CD4-positive, alpha-beta T cell (primary cell): ENCODE measurements at regions of chr1 and their contacts with region 1.

Region 1: GRCh38 chr1:26787706-26788514 is at the start of gene PIGV:
- DNase-seq: peak; percentile 76 to 94 (median 86)
- ATAC-seq: peak; percentile 69
- H3K4me3 ChIP-seq: peak within 1 kb of the TSS; percentile 84
- H3K4me3 Mint-ChIP-seq: peak within 1 kb of the TSS; percentile 98
- H3K27ac ChIP-seq: peak within 1 kb of the TSS; percentile 95 to 97
- H3K27ac Mint-ChIP-seq: peak within 1 kb of the TSS; percentile 96
- H3K4me1 ChIP-seq: peaks cover 70% of the 10 kb centered on the region
- H3K4me1 Mint-ChIP-seq: peaks cover 71% of the 10 kb centered on the region
- H3K27me3 ChIP-seq: no peaks in the 10 kb centered on the region
- H3K27me3 Mint-ChIP-seq: no peaks in the 10 kb centered on the region
- CTCF ChIP-seq: no peak
- total RNA-seq, gene PIGV: 3.8 to 4.7 TPM

Region 2: DNA sequence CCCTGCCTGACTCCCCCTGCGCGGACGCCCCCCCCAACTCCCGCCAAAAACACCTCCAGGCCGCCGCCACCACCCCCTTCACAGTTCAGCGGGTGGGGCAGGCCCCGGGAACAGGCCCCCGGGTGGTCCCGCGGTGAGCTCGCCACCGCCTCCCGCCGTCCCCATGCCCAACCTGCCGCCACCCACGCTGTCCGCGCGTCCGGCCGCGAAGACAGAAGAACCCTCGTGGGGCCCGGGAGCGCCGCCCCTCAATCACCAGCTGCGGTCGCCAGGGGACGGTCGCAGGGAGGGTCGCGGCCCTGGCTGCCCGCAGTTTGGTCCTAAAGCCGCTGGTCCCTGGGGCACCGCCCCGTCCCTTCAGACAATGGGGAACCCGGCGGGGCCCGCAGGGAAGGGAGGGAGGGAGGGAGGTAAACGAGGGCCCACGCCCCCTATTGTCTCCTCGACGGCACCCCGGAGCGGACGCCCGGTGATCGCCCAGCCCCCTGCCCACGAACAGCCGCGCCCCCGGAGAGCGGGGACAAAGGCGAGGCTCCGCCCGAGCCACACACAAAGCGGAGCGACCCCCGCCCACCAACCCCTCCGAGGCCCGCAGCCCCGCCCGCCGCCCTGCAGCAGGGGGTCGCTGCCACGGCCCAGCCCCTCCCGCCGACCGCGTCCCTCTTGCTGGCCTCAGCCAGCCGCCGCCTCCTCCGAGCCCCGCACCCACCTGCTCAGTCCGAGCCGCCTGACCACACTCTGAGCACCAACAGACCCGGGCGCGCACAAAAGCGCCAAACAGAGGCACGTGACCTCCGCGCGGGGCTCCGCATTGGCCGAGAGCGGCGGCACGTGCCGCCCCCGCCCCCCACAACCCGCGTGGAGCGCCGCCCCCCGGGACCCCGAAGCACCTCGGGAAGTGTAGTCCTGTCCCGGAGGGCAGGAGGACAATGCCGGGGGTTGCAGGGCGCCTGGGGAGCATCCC is 881.9 kb before region 1 on chr1 and contains the start of gene STMN1:
- CTCF ChIA-PET with region 1: no interaction called
- POLR2A ChIA-PET with region 1: no interaction called
- intact Hi-C with region 1: loop called in 1 of 2 experiments (anchors 5 kb)
- DNase-seq: peak; percentile 81 to 94 (median 88)
- ATAC-seq: peak; percentile 75
- H3K4me3 ChIP-seq: peak within 1 kb of the TSS; percentile 72
- H3K4me3 Mint-ChIP-seq: peak within 1 kb of the TSS; percentile 98
- H3K27ac ChIP-seq: peak within 1 kb of the TSS; percentile 64 to 65
- H3K27ac Mint-ChIP-seq: peak within 1 kb of the TSS; percentile 97
- H3K4me1 ChIP-seq: peaks cover 22% of the 10 kb centered on the region
- H3K4me1 Mint-ChIP-seq: peaks cover 23% of the 10 kb centered on the region
- H3K27me3 ChIP-seq: no peaks in the 10 kb centered on the region
- H3K27me3 Mint-ChIP-seq: no peaks in the 10 kb centered on the region
- CTCF ChIP-seq: no peak
- total RNA-seq, gene STMN1: 25.2 to 25.6 TPM

Region 3: DNA sequence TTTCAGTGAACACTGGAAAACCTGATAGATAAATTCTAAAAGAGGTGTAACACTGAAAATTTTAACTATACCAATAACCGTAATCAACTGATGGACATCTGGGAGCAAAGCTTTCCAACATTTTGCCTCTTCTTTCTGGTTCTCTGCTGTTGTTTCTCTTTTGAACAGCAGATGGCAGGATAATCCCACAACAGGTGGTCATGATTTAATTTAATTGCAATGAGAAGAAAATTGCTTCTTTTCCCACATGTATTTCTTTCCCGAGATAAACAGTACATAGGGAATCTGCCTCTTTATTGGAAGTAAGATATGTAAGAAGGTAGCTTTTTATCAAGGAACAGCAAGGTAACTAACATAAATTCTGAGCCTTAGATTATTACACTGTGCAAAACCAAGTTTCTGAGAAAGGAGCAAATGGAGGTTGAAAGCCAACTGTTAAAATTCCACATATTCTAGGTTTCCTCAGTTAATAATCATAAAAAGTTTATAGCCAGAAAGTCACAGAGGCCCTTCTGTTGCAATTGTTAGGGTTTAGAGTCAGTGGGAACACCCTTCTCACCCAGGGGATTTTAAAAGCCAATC is 185.4 kb before region 1 on chr1:
- CTCF ChIA-PET with region 1: interaction called, 80 read pairs
- POLR2A ChIA-PET with region 1: interaction called, 46 read pairs
- intact Hi-C with region 1: loop called (anchors 1 kb)
- DNase-seq: peak in 10 of 14 experiments; percentile 4 to 83 (median 30)
- ATAC-seq: peak; percentile 79
- H3K4me3 ChIP-seq: no peak overlapping the region
- H3K4me3 Mint-ChIP-seq: no peak overlapping the region
- H3K27ac ChIP-seq: no peak overlapping the region
- H3K27ac Mint-ChIP-seq: no peak overlapping the region
- H3K4me1 ChIP-seq: no peaks in the 10 kb centered on the region
- H3K4me1 Mint-ChIP-seq: peaks cover 14% of the 10 kb centered on the region
- H3K27me3 ChIP-seq: no peaks in the 10 kb centered on the region
- H3K27me3 Mint-ChIP-seq: no peaks in the 10 kb centered on the region
- CTCF ChIP-seq: peak; percentile 97

Region 4: GRCh38 chr1:26695356-26696118 is 92.4 kb before region 1 on chr1 and contains the start of gene ARID1A:
- CTCF ChIA-PET with region 1: interaction called, 47 read pairs
- POLR2A ChIA-PET with region 1: interaction called, 346 read pairs
- intact Hi-C with region 1: loop called (anchors 1 kb)
- DNase-seq: peak; percentile 93 to 98 (median 95)
- ATAC-seq: peak; percentile 60
- H3K4me3 ChIP-seq: peak within 1 kb of the TSS; percentile 89
- H3K4me3 Mint-ChIP-seq: peak within 1 kb of the TSS; percentile 92
- H3K27ac ChIP-seq: peak within 1 kb of the TSS; percentile 71 to 88
- H3K27ac Mint-ChIP-seq: peak within 1 kb of the TSS; percentile 96
- H3K4me1 ChIP-seq: peaks cover 40% of the 10 kb centered on the region
- H3K4me1 Mint-ChIP-seq: peaks cover 36% of the 10 kb centered on the region
- H3K27me3 ChIP-seq: no peaks in the 10 kb centered on the region
- H3K27me3 Mint-ChIP-seq: no peaks in the 10 kb centered on the region
- CTCF ChIP-seq: no peak
- total RNA-seq, gene ARID1A: 102 to 103 TPM

Region 5: GRCh38 chr1:26744075-26744959 is 43.6 kb before region 1 on chr1:
- CTCF ChIA-PET with region 1: interaction called, 4 read pairs
- POLR2A ChIA-PET with region 1: interaction called, 51 read pairs
- intact Hi-C with region 1: loop called (anchors 2 kb)
- DNase-seq: peak; percentile 53 to 96 (median 70)
- ATAC-seq: peak; percentile 94
- H3K4me3 ChIP-seq: peak overlapping the region; percentile 27
- H3K4me3 Mint-ChIP-seq: peak overlapping the region; percentile 57
- H3K27ac ChIP-seq: peak overlapping the region; percentile 72 to 80
- H3K27ac Mint-ChIP-seq: peak overlapping the region; percentile 87
- H3K4me1 ChIP-seq: peaks cover 88% of the 10 kb centered on the region
- H3K4me1 Mint-ChIP-seq: peaks cover 89% of the 10 kb centered on the region
- H3K27me3 ChIP-seq: no peaks in the 10 kb centered on the region
- H3K27me3 Mint-ChIP-seq: no peaks in the 10 kb centered on the region
- CTCF ChIP-seq: no peak

Region 6: DNA sequence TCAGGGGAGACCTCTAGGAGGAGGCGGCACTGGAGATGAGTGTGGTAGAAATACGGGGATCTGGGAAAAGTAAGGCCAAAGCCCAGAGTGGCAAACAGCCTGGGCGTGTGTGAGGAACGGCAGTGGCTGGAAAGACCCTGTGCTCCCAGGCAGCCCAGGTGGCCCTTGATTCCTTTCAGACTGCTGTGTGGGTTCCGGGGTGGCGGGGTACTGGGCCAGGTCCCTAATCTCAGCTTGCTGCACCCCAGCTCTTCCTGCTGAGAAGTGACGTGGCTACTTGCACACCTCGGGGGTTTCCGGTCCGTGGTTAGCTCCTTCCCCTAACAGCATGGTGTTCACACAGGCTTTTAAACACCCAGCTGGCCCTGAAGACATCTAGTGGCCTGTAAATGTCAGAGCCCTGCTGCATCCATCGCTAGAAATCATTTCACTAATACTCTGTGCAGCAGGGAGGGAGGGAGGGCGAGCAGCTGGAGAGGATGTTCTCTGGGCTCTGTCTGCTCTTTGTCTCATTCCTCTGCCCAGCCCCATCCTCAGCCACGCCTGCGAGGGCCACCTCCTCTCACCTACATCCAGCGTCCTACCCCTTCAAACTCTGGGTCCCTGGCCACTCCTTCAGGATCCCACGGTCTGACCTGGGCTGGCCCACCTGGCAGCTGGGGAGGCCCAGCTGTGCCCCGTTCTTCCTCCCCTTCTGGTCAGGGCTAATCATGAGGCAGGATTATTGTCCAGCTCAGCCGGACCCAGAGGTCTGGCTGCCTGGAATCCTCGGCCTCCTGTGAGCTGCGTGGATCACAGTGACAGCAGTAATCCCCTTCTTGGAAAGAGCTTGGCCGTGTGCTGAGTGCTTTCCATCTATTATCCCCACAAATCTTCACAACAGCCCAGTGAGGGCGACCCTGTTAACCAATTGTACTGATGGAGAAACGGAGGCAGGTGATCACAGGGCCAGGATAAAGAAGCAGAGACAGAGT is 45.8 kb after region 1 on chr1:
- CTCF ChIA-PET with region 1: interaction called, 8 read pairs
- POLR2A ChIA-PET with region 1: interaction called, 25 read pairs
- intact Hi-C with region 1: no loop called
- DNase-seq: peak; percentile 76 to 99 (median 86)
- ATAC-seq: peak; percentile 94
- H3K4me3 ChIP-seq: peak overlapping the region; percentile 32
- H3K4me3 Mint-ChIP-seq: peak overlapping the region; percentile 86
- H3K27ac ChIP-seq: peak overlapping the region; percentile 96 to 97
- H3K27ac Mint-ChIP-seq: peak overlapping the region; percentile 100
- H3K4me1 ChIP-seq: peaks cover 75% of the 10 kb centered on the region
- H3K4me1 Mint-ChIP-seq: peaks cover 75% of the 10 kb centered on the region
- H3K27me3 ChIP-seq: no peaks in the 10 kb centered on the region
- H3K27me3 Mint-ChIP-seq: no peaks in the 10 kb centered on the region
- CTCF ChIP-seq: peak; percentile 33

Region 7: GRCh38 chr1:26853156-26853555 is 65.2 kb after region 1 on chr1:
- CTCF ChIA-PET with region 1: no interaction called
- POLR2A ChIA-PET with region 1: no interaction called
- intact Hi-C with region 1: no loop called
- DNase-seq: peak; percentile 71 to 91 (median 82)
- ATAC-seq: peak; percentile 94
- H3K4me3 ChIP-seq: no peak overlapping the region
- H3K4me3 Mint-ChIP-seq: no peak overlapping the region
- H3K27ac ChIP-seq: no peak overlapping the region
- H3K27ac Mint-ChIP-seq: no peak overlapping the region
- H3K4me1 ChIP-seq: no peaks in the 10 kb centered on the region
- H3K4me1 Mint-ChIP-seq: peaks cover 9% of the 10 kb centered on the region
- H3K27me3 ChIP-seq: no peaks in the 10 kb centered on the region
- H3K27me3 Mint-ChIP-seq: no peaks in the 10 kb centered on the region
- CTCF ChIP-seq: peak; percentile 91

Region 8: GRCh38 chr1:26900001-26900814 is 112.3 kb after region 1 on chr1 and contains the start of gene GPATCH3:
- CTCF ChIA-PET with region 1: no interaction called
- POLR2A ChIA-PET with region 1: interaction called, 10 read pairs
- intact Hi-C with region 1: no loop called
- DNase-seq: peak; percentile 78 to 95 (median 86)
- ATAC-seq: peak; percentile 94
- H3K4me3 ChIP-seq: peak within 1 kb of the TSS; percentile 98
- H3K4me3 Mint-ChIP-seq: peak within 1 kb of the TSS; percentile 98
- H3K27ac ChIP-seq: peak within 1 kb of the TSS; percentile 82 to 94
- H3K27ac Mint-ChIP-seq: peak within 1 kb of the TSS; percentile 93
- H3K4me1 ChIP-seq: peaks cover 29% of the 10 kb centered on the region
- H3K4me1 Mint-ChIP-seq: peaks cover 31% of the 10 kb centered on the region
- H3K27me3 ChIP-seq: no peaks in the 10 kb centered on the region
- H3K27me3 Mint-ChIP-seq: no peaks in the 10 kb centered on the region
- CTCF ChIP-seq: no peak
- total RNA-seq, gene GPATCH3: 30.2 to 32.4 TPM

Region 9: DNA sequence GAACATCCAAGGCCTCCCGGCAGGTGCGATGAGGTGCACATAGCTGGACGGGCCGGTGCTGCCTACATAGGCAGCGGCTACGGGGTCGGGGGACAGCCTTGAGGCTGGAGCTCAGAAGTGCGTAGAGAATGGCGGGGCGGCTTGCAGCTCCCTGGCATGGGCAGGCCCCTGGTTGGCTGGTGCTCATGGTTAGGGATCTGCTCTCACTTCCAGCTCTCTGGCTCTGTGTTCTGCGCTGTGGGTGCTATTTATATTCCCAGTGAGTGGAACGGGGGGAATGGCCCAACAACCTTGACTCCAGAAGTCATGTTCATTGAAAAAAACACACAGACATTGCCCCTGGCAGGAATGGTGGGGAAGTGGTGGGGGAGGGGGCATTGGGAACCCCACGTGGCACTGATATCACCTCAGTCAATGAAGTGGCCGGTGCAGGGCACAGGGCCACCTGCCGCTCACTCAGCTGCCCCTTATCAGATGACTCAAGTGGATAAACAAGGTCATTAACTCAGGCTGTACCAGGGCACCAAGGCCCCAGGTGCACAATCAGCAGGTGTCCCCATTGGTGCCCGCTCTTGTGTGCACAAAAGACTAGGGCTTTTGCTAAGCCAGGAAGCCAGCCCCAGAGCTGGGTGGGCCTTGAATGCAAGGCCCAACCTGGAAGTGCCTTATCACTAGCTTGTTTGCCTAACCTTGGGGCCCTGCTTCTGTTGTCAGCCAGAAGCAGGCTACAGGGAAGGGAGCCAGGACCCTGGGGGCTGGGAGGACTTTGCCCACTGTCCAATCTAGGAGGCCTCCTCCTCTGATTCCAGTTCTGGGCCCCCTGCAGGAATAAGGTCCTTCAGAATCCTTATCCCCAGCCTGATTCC is 126.1 kb after region 1 on chr1 and contains the start of gene NR0B2:
- CTCF ChIA-PET with region 1: no interaction called
- POLR2A ChIA-PET with region 1: no interaction called
- intact Hi-C with region 1: no loop called
- DNase-seq: no peak
- ATAC-seq: no peak
- H3K4me3 ChIP-seq: no peak within 1 kb of the TSS
- H3K4me3 Mint-ChIP-seq: no peak within 1 kb of the TSS
- H3K27ac ChIP-seq: no peak within 1 kb of the TSS
- H3K27ac Mint-ChIP-seq: no peak within 1 kb of the TSS
- H3K4me1 ChIP-seq: no peaks in the 10 kb centered on the region
- H3K4me1 Mint-ChIP-seq: no peaks in the 10 kb centered on the region
- H3K27me3 ChIP-seq: no peaks in the 10 kb centered on the region
- H3K27me3 Mint-ChIP-seq: peaks cover 4% of the 10 kb centered on the region
- CTCF ChIP-seq: no peak
- total RNA-seq, gene NR0B2: not detected